HCT116 (cell line): ENCODE measurements at regions of chr11 and their contacts with region 1.

Region 1: GRCh38 chr11:59753650-59754493 is 1.3 kb upstream of the STX3 start:
- DNase-seq: peak; percentile 63
- ATAC-seq: peak; percentile 46
- H3K4me3 ChIP-seq: peak overlapping the region; percentile 87 to 90
- H3K27ac ChIP-seq: peak overlapping the region; percentile 84; the same call in 1 of the 2 replicates
- H3K4me1 ChIP-seq: peaks cover 9 to 30% of the 10 kb centered on the region in 2 experiments
- H3K27me3 ChIP-seq: no peaks in the 10 kb centered on the region
- CTCF ChIP-seq: peak; percentile 82 to 91 (median 90)
- POLR2A ChIP-seq: no peak
- RAD21 ChIP-seq: peak; percentile 96

Region 2: GRCh38 chr11:59550368-59550841 is 203.5 kb before region 1 on chr11:
- CTCF ChIA-PET with region 1: no interaction called
- POLR2A ChIA-PET with region 1: interaction called, 4 read pairs
- RAD21 ChIA-PET with region 1: no interaction called
- intact Hi-C with region 1: loop called (anchors 5 kb)
- DNase-seq: peak; percentile 96
- ATAC-seq: peak; percentile 88
- H3K4me3 ChIP-seq: peak overlapping the region; percentile 8 to 40; a peak in 3 of 4 replicates
- H3K27ac ChIP-seq: peak overlapping the region; percentile 74
- H3K4me1 ChIP-seq: peaks cover 44 to 65% of the 10 kb centered on the region in 2 experiments
- H3K27me3 ChIP-seq: no peaks in the 10 kb centered on the region
- CTCF ChIP-seq: peak in 2 of 3 experiments; percentile 22 to 38; a peak in 2 of 6 replicates
- POLR2A ChIP-seq: no peak
- RAD21 ChIP-seq: no peak; the same call in 1 of the 2 replicates

Region 3: DNA sequence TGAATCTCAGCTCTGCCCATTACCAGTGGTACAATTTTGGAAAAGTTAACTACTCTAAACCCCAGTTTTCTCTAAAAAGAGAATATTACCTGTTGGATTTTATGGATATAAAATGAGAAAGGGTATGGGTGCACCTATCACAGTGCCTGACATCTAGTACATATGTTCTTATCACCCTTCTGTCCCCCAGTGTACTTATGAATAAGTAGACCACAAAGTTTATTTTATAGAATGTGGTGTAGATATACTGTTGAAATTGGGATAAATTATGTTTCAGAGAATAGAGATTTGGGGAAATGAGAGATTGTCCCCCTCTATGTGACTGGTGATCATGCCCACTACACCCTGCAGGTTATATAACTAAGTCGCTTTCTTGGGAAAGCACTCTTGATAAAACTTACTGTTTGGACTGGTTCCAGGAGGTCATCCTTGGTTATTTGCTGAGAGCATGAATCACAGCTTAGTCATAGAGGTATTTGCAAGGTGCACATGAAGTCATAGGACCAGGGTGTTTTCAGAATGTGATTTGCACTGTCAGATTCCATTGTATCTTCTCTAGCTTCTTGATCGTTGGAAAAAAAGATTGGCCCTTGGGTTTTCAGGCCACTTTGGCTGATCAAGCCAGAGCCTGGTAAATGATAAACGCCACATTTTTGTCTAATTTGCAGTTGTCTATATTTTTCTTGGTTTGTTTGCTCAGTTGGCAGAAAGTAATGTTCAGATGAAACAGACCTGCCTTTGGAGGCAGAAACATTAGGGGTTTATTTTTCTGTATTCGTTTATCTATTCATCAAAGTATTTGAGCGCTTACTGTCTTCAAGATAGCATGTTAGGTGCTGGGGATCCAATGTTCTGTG is 22.6 kb after region 1 on chr11:
- CTCF ChIA-PET with region 1: interaction called, 5 read pairs
- POLR2A ChIA-PET with region 1: interaction called, 6 read pairs
- RAD21 ChIA-PET with region 1: no interaction called
- intact Hi-C with region 1: loop called (anchors 1 kb)
- DNase-seq: peak; percentile 85
- ATAC-seq: peak; percentile 87
- H3K4me3 ChIP-seq: no peak overlapping the region
- H3K27ac ChIP-seq: no peak overlapping the region
- H3K4me1 ChIP-seq: peaks cover 14 to 31% of the 10 kb centered on the region in 2 experiments
- H3K27me3 ChIP-seq: no peaks in the 10 kb centered on the region
- CTCF ChIP-seq: no peak
- POLR2A ChIP-seq: no peak
- RAD21 ChIP-seq: no peak

Region 4: GRCh38 chr11:59802639-59803176 is 48.8 kb after region 1 on chr11:
- CTCF ChIA-PET with region 1: interaction called, 40 read pairs
- POLR2A ChIA-PET with region 1: interaction called, 15 read pairs
- RAD21 ChIA-PET with region 1: interaction called, 5 read pairs
- intact Hi-C with region 1: loop called (anchors 1 kb)
- DNase-seq: peak; percentile 46
- ATAC-seq: peak; percentile 67
- H3K4me3 ChIP-seq: no peak overlapping the region
- H3K27ac ChIP-seq: no peak overlapping the region
- H3K4me1 ChIP-seq: peaks cover 0 to 7% of the 10 kb centered on the region in 2 experiments; a peak in 1 of 4 replicates
- H3K27me3 ChIP-seq: no peaks in the 10 kb centered on the region
- CTCF ChIP-seq: peak; percentile 41 to 95 (median 66); a peak in 5 of 6 replicates
- POLR2A ChIP-seq: no peak
- RAD21 ChIP-seq: peak; percentile 94

Region 5: DNA sequence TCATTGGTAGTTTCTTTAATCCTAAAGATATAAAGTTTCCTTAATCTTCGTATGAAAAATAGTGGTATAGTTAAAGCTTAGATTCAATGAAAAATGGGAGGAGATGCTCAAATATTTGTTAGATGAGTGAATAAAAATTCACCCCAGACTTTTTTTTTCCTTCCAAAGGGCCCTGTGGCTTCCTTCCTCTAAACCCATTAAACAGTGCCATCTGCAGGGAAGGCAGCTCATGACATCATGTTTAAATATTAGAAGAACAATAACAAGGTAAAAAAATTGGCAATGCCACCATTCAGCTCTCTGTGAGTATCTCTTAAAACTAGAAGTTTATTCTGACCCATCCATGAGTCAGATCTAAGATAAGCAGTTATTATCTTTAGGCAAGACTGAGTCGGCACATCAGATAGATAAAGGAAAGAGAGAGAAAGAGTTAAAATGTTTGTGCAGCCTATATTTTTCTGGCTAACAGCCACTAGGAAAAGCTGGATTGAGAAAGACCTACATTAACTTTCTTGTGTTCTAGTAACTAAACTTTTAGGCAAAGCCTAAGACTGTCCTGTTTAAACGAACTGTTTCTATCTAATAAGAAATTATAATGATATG is 165.2 kb after region 1 on chr11:
- CTCF ChIA-PET with region 1: interaction called, 5 read pairs
- POLR2A ChIA-PET with region 1: no interaction called
- RAD21 ChIA-PET with region 1: no interaction called
- intact Hi-C with region 1: loop called (anchors 1 kb)
- DNase-seq: peak; percentile 56
- ATAC-seq: peak; percentile 85
- H3K4me3 ChIP-seq: no peak overlapping the region
- H3K27ac ChIP-seq: no peak overlapping the region
- H3K4me1 ChIP-seq: no peaks in the 10 kb centered on the region
- H3K27me3 ChIP-seq: no peaks in the 10 kb centered on the region
- CTCF ChIP-seq: peak; percentile 60 to 81 (median 77)
- POLR2A ChIP-seq: no peak
- RAD21 ChIP-seq: peak; percentile 89

Region 6: GRCh38 chr11:60130496-60130895 is 376.6 kb after region 1 on chr11:
- CTCF ChIA-PET with region 1: no interaction called
- POLR2A ChIA-PET with region 1: no interaction called
- RAD21 ChIA-PET with region 1: interaction called in 1 of 2 experiments, 3 read pairs
- intact Hi-C with region 1: loop called (anchors 10 kb)
- DNase-seq: peak; percentile 47
- ATAC-seq: peak; percentile 97
- H3K4me3 ChIP-seq: no peak overlapping the region
- H3K27ac ChIP-seq: no peak overlapping the region
- H3K4me1 ChIP-seq: peaks cover 3 to 16% of the 10 kb centered on the region in 2 experiments; a peak in 3 of 4 replicates
- H3K27me3 ChIP-seq: no peaks in the 10 kb centered on the region
- CTCF ChIP-seq: peak; percentile 50 to 65 (median 54); a peak in 5 of 6 replicates
- POLR2A ChIP-seq: no peak
- RAD21 ChIP-seq: peak; percentile 73